Endothelial cell of umbilical vein (primary cell): ENCODE measurements at regions of chr9 and their contacts with region 1.

Region 1: GRCh38 chr9:98848450-98849149 is 41.1 kb downstream of the GALNT12 start:
- DNase-seq: peak; percentile 80
- H3K4me3 ChIP-seq: no peak overlapping the region
- H3K27ac ChIP-seq: no peak overlapping the region
- H3K4me1 ChIP-seq: no peaks in the 10 kb centered on the region
- H3K27me3 ChIP-seq: no peaks in the 10 kb centered on the region
- CTCF ChIP-seq: peak; percentile 93 to 94
- POLR2A ChIP-seq: no peak

Region 2: DNA sequence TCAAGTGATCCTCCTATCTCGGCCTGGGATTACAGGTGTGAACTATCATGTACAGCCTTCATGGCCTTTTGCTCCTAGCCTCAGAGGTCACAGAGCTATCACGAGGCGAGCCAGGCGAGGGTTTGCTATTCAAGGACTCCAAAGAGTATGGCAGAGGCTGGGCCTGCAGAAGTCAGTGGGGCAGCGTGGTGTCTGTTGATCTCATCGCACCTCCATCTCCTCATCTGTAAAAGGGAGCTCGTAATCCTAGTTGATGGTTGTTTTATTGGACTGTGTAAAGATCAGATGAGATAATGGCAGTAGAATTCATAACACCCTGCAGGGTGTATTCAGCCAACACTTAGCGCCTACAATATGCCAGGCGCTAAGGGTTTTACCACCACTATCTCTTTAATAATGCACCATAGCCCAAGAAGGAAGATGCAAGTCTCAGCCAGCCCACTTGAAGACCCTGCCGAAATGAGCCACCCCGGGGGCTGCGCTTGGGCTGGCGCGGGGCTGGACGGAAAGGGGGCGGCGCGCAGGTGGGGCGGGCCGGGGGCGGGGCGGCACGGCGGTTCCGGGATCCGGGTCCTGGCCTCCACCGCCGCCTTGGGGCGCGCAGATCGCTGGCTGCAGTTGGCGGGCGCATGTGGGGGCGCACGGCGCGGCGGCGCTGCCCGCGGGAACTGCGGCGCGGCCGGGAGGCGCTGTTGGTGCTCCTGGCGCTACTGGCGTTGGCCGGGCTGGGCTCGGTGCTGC is 41.4 kb before region 1 on chr9 and contains the start of gene GALNT12:
- CTCF ChIA-PET with region 1: interaction called, 12 read pairs
- POLR2A ChIA-PET with region 1: no interaction called
- dilution Hi-C with region 1: no loop called
- intact Hi-C with region 1: no loop called
- DNase-seq: no peak
- H3K4me3 ChIP-seq: peak within 1 kb of the TSS; percentile 40 to 59 (median 40)
- H3K27ac ChIP-seq: no peak within 1 kb of the TSS
- H3K4me1 ChIP-seq: peaks cover 6% of the 10 kb centered on the region
- H3K27me3 ChIP-seq: peaks cover 22 to 28% of the 10 kb centered on the region in 2 experiments
- CTCF ChIP-seq: peak in 1 of 2 donors; percentile 2
- POLR2A ChIP-seq: no peak
- total RNA-seq, gene GALNT12: 0.42 and 0.44 TPM in 2 replicates

Region 3: GRCh38 chr9:98838155-98838867 is 10.3 kb before region 1 on chr9:
- CTCF ChIA-PET with region 1: interaction called, 26 read pairs
- POLR2A ChIA-PET with region 1: no interaction called
- dilution Hi-C with region 1: no loop called
- intact Hi-C with region 1: no loop called
- DNase-seq: no peak
- H3K4me3 ChIP-seq: no peak overlapping the region
- H3K27ac ChIP-seq: no peak overlapping the region
- H3K4me1 ChIP-seq: no peaks in the 10 kb centered on the region
- H3K27me3 ChIP-seq: no peaks in the 10 kb centered on the region
- CTCF ChIP-seq: no peak
- POLR2A ChIP-seq: no peak

Region 4: GRCh38 chr9:98974994-98975712 is 126.6 kb after region 1 on chr9:
- CTCF ChIA-PET with region 1: interaction called, 11 read pairs
- POLR2A ChIA-PET with region 1: no interaction called
- dilution Hi-C with region 1: no loop called
- intact Hi-C with region 1: loop called (anchors 1 kb)
- DNase-seq: peak; percentile 58
- H3K4me3 ChIP-seq: no peak overlapping the region
- H3K27ac ChIP-seq: no peak overlapping the region
- H3K4me1 ChIP-seq: no peaks in the 10 kb centered on the region
- H3K27me3 ChIP-seq: peaks cover 0 to 3% of the 10 kb centered on the region in 2 experiments
- CTCF ChIP-seq: peak; percentile 95 to 100
- POLR2A ChIP-seq: no peak

Region 5: GRCh38 chr9:99140685-99141314 is 292.2 kb after region 1 on chr9:
- CTCF ChIA-PET with region 1: interaction called, 50 read pairs
- POLR2A ChIA-PET with region 1: no interaction called
- dilution Hi-C with region 1: no loop called
- intact Hi-C with region 1: loop called (anchors 1 kb)
- DNase-seq: peak; percentile 30
- H3K4me3 ChIP-seq: no peak overlapping the region
- H3K27ac ChIP-seq: no peak overlapping the region
- H3K4me1 ChIP-seq: no peaks in the 10 kb centered on the region
- H3K27me3 ChIP-seq: no peaks in the 10 kb centered on the region
- CTCF ChIP-seq: peak; percentile 63 to 73
- POLR2A ChIP-seq: no peak

Region 6: DNA sequence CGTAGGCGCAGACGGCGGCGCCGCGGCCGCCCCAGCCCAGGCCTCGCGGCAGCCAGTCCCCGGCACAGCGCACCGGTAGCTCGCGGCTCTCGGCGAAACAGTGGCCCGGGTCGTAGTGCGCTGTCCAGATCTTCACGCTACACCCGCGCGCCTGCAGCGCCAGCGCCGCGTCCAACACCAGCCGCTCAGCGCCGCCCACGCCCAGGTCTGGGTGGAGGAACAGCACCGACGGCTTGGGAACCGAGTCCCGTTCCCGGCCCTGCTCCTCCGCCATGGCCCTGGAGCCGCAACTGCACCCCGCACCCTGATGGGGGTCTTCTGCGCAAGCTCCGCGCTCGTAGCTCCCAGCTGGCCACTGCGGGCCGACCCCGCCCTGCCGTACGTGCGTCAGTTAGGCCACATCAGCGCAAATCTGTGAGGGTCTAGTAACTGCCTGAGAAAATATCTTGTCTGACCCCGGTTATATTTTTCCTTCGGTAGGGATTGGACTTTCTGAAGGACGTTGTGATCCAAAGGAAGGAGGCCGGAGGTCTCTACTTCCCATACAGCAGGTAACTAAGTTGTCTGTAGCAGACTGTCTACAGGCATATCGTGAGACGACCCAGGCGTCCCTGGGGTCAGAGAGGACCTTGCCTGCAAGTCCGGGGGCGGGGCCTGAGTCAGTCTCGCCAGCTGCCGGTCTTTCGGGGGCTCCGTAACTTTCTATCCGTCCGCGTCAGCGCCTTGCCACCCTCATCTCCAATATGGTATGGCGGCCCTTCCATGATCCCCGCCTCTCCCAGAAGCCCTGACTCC is 373.2 kb after region 1 on chr9 and contains the starts of genes ALG2 and SEC61B:
- CTCF ChIA-PET with region 1: no interaction called
- POLR2A ChIA-PET with region 1: no interaction called
- dilution Hi-C with region 1: no loop called
- intact Hi-C with region 1: loop called (anchors 1 kb)
- DNase-seq: peak; percentile 97
- H3K4me3 ChIP-seq: peak within 1 kb of the TSS; percentile 55 to 98 (median 91)
- H3K27ac ChIP-seq: peak within 1 kb of the TSS; percentile 99
- H3K4me1 ChIP-seq: peaks cover 28% of the 10 kb centered on the region
- H3K27me3 ChIP-seq: no peaks in the 10 kb centered on the region
- CTCF ChIP-seq: no peak
- POLR2A ChIP-seq: peak; percentile 93
- total RNA-seq, gene ALG2: 31.4 and 32.4 TPM in 2 replicates
- total RNA-seq, gene SEC61B: 241 and 242 TPM in 2 replicates